Breast epithelium (tissue), 4 donors: ENCODE measurements at regions of chr21 and their contacts with region 1.

Region 1: DNA sequence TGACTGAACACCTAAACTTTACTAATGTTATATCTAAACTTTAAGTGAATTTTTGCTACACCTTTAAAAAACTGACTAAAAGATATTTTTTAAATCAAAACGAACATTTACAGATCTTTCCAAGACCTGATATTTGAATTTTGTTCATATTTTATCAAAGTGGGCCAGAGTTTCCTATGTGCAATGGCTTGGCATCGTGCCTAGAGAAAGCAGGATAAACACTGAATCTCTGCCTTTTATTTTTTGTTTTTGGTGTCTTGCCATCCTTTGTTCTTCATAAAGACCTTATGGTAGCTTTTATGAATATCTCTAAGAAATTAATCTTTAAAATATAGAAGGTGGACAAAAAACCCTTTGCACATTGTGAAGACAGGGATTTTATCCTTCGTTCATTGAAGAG is 25.8 kb upstream of the VPS26C start:
- DNase-seq: no peak
- H3K4me3 ChIP-seq: no peak overlapping the region
- H3K27ac ChIP-seq: no peak overlapping the region
- H3K4me1 ChIP-seq: no peaks in the 10 kb centered on the region
- H3K27me3 ChIP-seq: no peaks in the 10 kb centered on the region
- CTCF ChIP-seq: no peak
- POLR2A ChIP-seq: no peak

Region 2: GRCh38 chr21:36471254-36471723 is 821.7 kb before region 1 on chr21:
- intact Hi-C with region 1: loop called (anchors 10 kb)
- DNase-seq: no peak
- H3K4me3 ChIP-seq: no peak overlapping the region
- H3K27ac ChIP-seq: no peak overlapping the region
- H3K4me1 ChIP-seq: no peaks in the 10 kb centered on the region
- H3K27me3 ChIP-seq: no peaks in the 10 kb centered on the region
- CTCF ChIP-seq: no peak
- POLR2A ChIP-seq: no peak

Region 3: DNA sequence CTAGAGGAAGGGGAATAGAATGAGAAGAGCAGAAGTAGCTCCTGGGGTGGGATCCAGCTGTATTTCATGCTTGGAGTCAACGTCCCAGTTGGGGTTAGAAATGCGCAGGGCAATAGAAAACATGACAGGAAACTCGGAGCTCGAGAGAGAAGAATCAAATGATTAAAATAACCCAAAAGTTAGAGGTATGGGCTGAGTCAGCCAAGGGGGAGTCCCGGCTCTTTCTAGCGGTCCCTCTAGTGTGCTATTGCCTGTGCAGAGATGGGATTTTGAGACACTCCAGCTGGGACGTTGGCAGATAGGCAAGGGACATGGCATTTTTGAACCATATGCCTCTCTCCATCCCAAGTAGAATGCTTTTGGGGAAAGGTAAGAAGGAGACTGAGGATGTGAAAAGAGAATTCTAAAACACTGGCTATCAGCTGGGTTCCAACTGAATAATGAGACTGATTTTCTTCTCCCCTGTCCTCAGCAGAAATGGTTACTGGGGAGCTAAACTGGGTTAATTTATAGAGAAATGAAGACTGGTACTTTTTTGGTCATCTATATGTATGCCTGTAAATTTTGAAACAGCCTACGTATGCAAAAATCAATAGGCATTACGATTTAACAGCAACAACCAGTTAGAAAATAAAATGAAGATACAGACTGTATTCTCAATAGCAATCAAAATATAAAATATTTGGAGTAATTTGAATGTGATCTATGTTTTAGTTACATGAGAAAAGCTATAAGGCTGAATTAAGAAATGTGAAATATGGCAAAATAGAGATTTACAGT is 18.8 kb before region 1 on chr21:
- intact Hi-C with region 1: no loop called
- DNase-seq: no peak
- H3K4me3 ChIP-seq: no peak overlapping the region
- H3K27ac ChIP-seq: no peak overlapping the region
- H3K4me1 ChIP-seq: no peaks in the 10 kb centered on the region
- H3K27me3 ChIP-seq: no peaks in the 10 kb centered on the region
- CTCF ChIP-seq: no peak
- POLR2A ChIP-seq: no peak